ENCODE measurements at regions of chr16 and their contacts with region 1.

Region 1: DNA sequence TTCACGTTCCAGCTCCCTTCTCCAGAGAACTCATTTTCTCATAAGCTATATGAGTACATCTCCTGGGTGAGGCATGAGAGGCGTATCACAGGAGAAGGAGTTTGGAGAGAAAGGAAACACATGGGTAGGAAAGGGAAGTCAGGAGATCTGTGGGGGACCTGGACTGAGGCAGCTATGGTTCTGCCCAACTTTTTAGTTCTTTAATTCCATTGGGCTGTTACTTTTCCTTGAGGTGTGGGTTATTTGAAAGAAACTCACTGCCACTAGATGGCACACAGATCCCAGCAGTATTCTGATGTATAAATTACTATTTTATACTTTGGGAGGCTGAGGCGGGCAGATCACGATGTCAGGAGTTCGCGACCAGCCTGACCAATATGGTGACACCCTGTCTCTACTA is 63.6 kb downstream of the NUP93 start:
- DNase-seq: no peak
- H3K4me3 ChIP-seq: no peak overlapping the region
- CTCF ChIP-seq: no peak
- POLR2A ChIP-seq: no peak

Region 2: GRCh38 chr16:56673921-56674320 is 119.6 kb before region 1 on chr16:
- intact Hi-C with region 1: loop called (anchors 10 kb)
- DNase-seq: no peak
- H3K4me3 ChIP-seq: no peak overlapping the region
- CTCF ChIP-seq: no peak
- POLR2A ChIP-seq: no peak

Region 3: GRCh38 chr16:56749672-56750491 is 43.6 kb before region 1 on chr16:
- intact Hi-C with region 1: no loop called
- DNase-seq: no peak
- H3K4me3 ChIP-seq: no peak overlapping the region
- CTCF ChIP-seq: no peak
- POLR2A ChIP-seq: no peak

Measured in lower leg skin (tissue), 4 donors.